Gastrocnemius medialis (tissue), 4 donors: ENCODE measurements at regions of chr20 and their contacts with region 1.

Region 1: DNA sequence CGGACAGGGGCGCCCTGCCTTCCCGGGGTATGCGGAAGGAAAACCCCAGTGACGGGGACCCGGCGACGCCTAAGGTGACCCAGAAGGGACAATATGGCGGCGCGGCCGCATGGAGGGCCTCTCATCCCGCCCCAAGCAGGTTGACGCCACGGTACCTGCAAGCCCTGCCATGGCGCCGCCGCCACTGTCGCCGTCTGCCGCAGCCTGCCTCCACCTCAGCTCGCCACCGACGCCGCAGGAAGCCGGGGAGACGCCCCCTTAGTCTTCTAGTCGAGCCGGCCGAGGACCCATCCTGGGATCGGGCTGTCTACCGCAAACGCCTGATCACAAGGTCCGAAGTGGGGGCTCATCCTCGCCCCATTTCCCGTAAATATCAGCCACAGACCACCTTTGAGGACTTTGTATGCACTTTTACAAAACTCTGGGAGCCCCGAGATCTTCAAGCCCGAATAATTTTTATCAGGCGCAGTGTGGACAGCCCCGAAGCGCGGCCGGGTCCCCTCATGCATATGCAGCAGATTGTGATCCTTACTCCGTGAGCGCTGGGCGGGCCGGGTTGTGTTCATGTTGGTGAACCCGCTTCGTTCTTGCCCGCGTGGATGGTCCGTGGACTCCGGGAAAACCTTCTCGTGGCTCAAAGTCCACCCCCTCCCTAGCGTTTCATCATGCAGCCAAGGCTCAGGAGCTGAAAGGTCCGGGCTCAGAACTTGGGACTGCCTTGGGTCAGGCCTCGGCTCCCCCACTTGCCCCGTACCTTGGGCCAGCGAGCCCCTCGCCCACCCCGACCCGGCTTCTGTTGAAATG is at the start of gene BLCAP:
- DNase-seq: peak; percentile 85 to 91
- ATAC-seq: peak; percentile 54 to 59
- H3K4me3 ChIP-seq: peak within 1 kb of the TSS; percentile 92 to 100 (median 99)
- H3K27ac ChIP-seq: peak within 1 kb of the TSS; percentile 98 to 100 (median 98)
- H3K4me1 ChIP-seq: peaks cover 34 to 36% of the 10 kb centered on the region in 2 donors
- H3K27me3 ChIP-seq: no peaks in the 10 kb centered on the region
- CTCF ChIP-seq: no peak
- POLR2A ChIP-seq: peak; percentile 98
- total RNA-seq, gene BLCAP: 222 to 583 (median 280) TPM

Region 2: GRCh38 chr20:36460648-36461599 is 1066.9 kb before region 1 on chr20:
- in situ Hi-C with region 1: no loop called
- intact Hi-C with region 1: loop called (anchors 10 kb)
- DNase-seq: peak; percentile 88 to 95
- ATAC-seq: peak; percentile 61 to 64
- H3K4me3 ChIP-seq: peak overlapping the region; percentile 55 to 83 (median 59)
- H3K27ac ChIP-seq: peak overlapping the region; percentile 99 to 100 (median 100)
- H3K4me1 ChIP-seq: peaks cover 33 to 35% of the 10 kb centered on the region in 2 donors
- H3K27me3 ChIP-seq: no peaks in the 10 kb centered on the region
- CTCF ChIP-seq: no peak
- POLR2A ChIP-seq: peak; percentile 99

Region 3: GRCh38 chr20:37095599-37096414 is 432.0 kb before region 1 on chr20 and contains the start of gene RBL1:
- in situ Hi-C with region 1: no loop called
- intact Hi-C with region 1: loop called (anchors 10 kb)
- DNase-seq: peak; percentile 60 to 68
- ATAC-seq: peak; percentile 67 to 81
- H3K4me3 ChIP-seq: peak within 1 kb of the TSS; percentile 76 to 98 (median 78)
- H3K27ac ChIP-seq: peak within 1 kb of the TSS; percentile 77 to 83 (median 80)
- H3K4me1 ChIP-seq: peaks cover 18 to 24% of the 10 kb centered on the region in 2 donors
- H3K27me3 ChIP-seq: no peaks in the 10 kb centered on the region
- CTCF ChIP-seq: peak in 4 of 5 experiments; percentile 16 to 57 (median 46)
- POLR2A ChIP-seq: peak; percentile 42 to 45
- total RNA-seq, gene RBL1: 2.9 to 13.0 (median 6.1) TPM

Region 4: GRCh38 chr20:37178839-37179670 is 348.8 kb before region 1 on chr20 and contains the starts of genes MROH8 and RPN2:
- in situ Hi-C with region 1: no loop called
- intact Hi-C with region 1: loop called (anchors 1 kb)
- DNase-seq: peak; percentile 97 to 98
- ATAC-seq: peak; percentile 86 to 90
- H3K4me3 ChIP-seq: peak within 1 kb of the TSS; percentile 69 to 95 (median 84)
- H3K27ac ChIP-seq: peak within 1 kb of the TSS; percentile 94 to 98 (median 98)
- H3K4me1 ChIP-seq: peaks cover 30 to 38% of the 10 kb centered on the region in 2 donors
- H3K27me3 ChIP-seq: no peaks in the 10 kb centered on the region
- CTCF ChIP-seq: peak in 1 of 5 experiments; percentile 13
- POLR2A ChIP-seq: peak; percentile 81 to 93
- total RNA-seq, gene MROH8: 1.4 to 4.4 (median 3.0) TPM
- total RNA-seq, gene RPN2: 85.7 to 132 (median 127) TPM

Region 5: GRCh38 chr20:37192137-37192854 is 335.5 kb before region 1 on chr20:
- in situ Hi-C with region 1: loop called in 3 of 4 experiments (anchors 5 to 10 kb)
- intact Hi-C with region 1: loop called (anchors 2 kb)
- DNase-seq: peak; percentile 74 to 87
- ATAC-seq: peak; percentile 72 to 87
- H3K4me3 ChIP-seq: no peak overlapping the region
- H3K27ac ChIP-seq: peak overlapping the region in 3 of 4 donors; percentile 40 to 72 (median 47)
- H3K4me1 ChIP-seq: peaks cover 47 to 50% of the 10 kb centered on the region in 2 donors
- H3K27me3 ChIP-seq: no peaks in the 10 kb centered on the region
- CTCF ChIP-seq: peak; percentile 73 to 95 (median 85)
- POLR2A ChIP-seq: no peak

Region 6: DNA sequence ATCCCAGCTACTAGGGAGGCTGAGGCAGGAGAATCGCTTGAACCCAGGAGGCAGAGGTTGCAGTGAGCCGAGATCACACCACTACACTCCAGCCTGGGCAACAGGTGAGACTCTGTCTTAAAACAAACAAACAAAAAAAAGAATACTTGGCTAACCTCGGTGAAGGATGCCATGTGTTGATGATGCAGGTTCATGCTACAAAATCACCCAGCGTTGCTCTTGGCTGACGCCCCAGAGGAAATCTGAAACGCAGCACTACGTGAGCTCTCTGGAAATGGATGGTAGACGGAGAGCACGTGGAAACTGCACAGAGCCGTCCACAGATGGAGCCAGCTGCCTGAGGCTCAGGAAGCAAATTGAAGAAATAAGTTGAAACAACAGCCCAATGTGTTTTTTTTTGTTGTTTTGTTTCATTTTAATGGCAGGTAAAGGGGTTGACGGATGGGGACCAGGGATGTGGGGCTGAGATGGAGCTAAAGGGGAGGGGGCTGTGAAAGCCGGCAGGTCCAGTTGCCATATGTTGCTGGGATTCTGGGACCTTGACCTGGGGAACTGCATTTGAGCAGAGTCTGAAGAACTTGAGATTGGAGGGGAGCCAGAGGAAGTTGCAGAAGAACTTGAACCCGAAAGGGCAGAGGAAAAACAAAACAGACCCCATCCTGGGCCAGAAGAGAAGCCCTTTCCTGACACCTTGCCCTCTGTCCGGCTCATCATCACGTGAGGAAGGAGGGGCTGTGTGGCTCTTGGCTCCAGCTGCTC is 251.2 kb before region 1 on chr20:
- in situ Hi-C with region 1: loop called in 3 of 4 experiments (anchors 5 kb)
- intact Hi-C with region 1: loop called (anchors 2 kb)
- DNase-seq: peak; percentile 63 to 79
- ATAC-seq: peak; percentile 98 to 99
- H3K4me3 ChIP-seq: no peak overlapping the region
- H3K27ac ChIP-seq: peak overlapping the region; percentile 71 to 77 (median 76)
- H3K4me1 ChIP-seq: peaks cover 8 to 13% of the 10 kb centered on the region in 2 donors
- H3K27me3 ChIP-seq: no peaks in the 10 kb centered on the region
- CTCF ChIP-seq: peak in 1 of 5 experiments; percentile 17
- POLR2A ChIP-seq: no peak

Region 7: DNA sequence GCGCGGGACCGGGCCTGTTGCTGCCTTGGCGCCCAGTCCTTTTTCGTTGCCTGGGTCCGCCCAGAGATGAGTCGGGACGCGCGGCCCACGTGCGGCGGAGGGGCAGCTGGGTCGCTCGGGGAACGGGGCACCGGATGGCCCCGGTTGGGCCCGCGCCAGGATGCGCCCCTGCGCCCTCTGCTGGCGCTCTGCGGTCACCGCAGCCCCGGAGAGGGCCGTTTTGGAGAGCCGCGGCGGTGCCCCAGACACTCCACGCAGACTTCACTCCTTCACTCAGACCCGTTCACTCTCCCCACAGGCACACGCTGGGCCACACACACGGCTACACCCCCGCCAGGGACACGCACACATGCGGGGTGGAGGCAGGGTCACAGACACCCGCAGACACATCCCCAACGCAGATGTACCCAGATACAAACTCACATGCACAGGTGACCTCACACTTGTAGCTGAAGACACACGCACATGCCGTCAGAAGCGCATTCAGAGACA is 143.1 kb before region 1 on chr20:
- in situ Hi-C with region 1: loop called in 3 of 4 experiments (anchors 5 to 25 kb)
- intact Hi-C with region 1: loop called (anchors 2 kb)
- DNase-seq: peak in 1 of 2 donors; percentile 47
- ATAC-seq: peak; percentile 57 to 89
- H3K4me3 ChIP-seq: peak overlapping the region; percentile 54 to 59 (median 57)
- H3K27ac ChIP-seq: no peak overlapping the region
- H3K4me1 ChIP-seq: peaks cover 0 to 5% of the 10 kb centered on the region in 2 donors
- H3K27me3 ChIP-seq: no peaks in the 10 kb centered on the region
- CTCF ChIP-seq: peak; percentile 84 to 97 (median 93)
- POLR2A ChIP-seq: no peak

Region 8: DNA sequence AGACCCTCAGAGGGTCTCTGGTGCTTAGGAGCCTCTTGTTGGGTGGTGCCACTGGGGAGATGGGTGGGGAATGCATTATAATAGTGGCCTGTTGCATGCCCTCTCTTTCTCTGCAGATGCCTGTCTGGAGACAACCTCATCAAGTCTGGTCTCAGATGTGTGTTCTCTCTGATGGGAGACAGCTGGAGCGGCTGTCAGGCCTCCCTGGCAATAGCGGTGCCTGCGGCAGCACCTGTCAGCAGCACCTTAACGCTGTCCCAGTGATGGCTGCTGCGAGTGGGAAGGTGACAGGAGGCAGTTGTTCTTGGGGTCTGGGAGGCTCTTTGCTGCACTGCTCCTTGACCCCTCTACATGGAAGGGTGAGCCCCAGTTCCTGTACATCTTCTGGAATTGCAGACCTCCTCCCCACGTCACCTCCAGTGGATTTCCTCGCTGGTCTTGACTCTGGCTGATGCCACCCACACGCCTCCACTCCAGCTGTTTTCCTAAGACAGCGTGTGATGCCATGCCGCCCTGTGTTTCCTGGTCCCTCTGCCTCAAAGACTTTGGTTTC is 63.2 kb after region 1 on chr20:
- in situ Hi-C with region 1: no loop called
- intact Hi-C with region 1: no loop called
- DNase-seq: no peak
- ATAC-seq: no peak
- H3K4me3 ChIP-seq: no peak overlapping the region
- H3K27ac ChIP-seq: no peak overlapping the region
- H3K4me1 ChIP-seq: no peaks in the 10 kb centered on the region
- H3K27me3 ChIP-seq: peaks cover 1 to 13% (median 12%) of the 10 kb centered on the region in 3 donors
- CTCF ChIP-seq: no peak
- POLR2A ChIP-seq: no peak